ENCODE measurements at regions of chr1 and their contacts with region 1.

Region 1: DNA sequence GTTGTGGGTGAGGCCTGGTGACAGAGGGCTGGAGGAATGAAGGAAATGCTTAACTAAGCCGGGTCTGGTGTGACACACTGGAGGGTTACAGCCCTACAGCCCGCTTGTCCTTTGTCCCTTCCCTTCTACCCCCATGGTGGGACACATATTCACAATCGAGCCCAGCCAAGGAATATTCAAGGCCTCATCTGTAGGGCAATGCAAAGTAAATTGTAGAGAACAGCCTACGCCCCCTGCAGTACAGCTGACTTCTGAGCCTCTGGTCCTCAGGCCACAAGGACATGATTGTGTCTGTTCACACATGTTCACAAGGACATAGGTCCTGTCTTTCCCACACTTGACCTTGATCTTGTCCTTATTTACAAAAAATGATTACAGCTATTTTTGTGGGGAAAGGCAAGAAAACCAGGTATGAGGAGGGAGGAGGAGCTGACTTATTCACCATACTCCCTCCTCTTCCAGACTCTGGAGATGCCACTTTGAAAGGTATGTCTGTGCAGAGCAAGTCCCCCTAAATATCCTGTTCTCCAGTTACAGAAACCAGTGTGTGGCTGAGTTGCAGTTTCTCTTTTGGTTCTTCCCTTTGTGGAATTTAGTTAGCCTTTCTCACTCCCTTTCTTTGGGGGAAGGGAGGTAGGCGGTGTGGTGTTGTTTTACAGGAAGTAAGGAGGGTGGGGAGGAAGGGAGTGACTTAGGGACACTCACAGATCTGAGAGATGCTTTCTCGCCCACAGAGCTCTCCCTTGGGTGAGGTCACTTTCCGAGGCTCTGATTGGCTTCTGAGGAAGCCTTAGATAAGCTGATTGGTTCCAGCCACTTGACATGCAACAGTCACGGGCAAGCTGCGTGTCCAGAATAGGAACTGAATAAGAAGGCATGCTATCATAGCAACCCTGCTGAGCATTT is 14.6 kb downstream of the POLR3GL start:
- DNase-seq: peak; percentile 99
- H3K4me3 ChIP-seq: peak overlapping the region; percentile 44
- H3K27ac ChIP-seq: peak overlapping the region; percentile 97
- H3K27me3 ChIP-seq: no peaks in the 10 kb centered on the region
- CTCF ChIP-seq: peak; percentile 48; the same call in 1 of the 2 replicates

Region 2: DNA sequence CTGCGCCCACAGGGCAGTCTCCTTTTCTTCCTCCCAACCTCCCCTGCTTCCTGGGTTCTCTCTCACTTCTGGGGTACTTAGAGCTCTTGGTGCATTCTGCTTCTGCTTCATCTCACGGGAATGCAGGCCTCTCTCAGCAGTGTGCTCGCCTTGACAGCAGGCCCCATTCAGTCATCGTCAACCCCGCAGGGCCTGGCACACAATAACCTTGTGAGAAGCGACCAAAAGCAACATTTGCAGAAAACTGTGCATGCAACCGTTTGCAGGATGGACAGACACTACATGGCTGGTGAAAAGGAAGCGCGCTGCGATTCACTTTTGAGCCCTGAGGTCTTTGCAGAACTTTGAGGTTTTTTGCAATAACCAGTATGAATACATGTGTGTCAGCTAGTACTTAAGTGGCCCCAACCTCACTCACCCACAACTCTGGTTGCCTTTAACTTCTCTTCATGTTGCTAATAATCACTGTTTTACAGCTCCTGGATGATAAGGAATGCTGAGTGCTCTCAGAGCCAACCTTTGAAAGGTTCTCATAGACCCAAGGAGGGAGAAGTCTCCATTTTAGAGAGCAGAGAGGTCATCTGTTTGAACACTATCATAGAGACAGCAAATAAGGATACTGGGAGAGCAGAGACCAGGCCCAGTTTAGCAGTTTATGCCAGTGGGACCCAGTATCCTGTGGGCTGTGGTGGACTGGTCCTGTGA is 262.3 kb before region 1 on chr1:
- CTCF ChIA-PET with region 1: no interaction called
- POLR2A ChIA-PET with region 1: no interaction called
- DNase-seq: no peak
- H3K4me3 ChIP-seq: no peak overlapping the region
- H3K27ac ChIP-seq: peak overlapping the region; percentile 39
- H3K27me3 ChIP-seq: no peaks in the 10 kb centered on the region
- CTCF ChIP-seq: no peak

Region 3: GRCh38 chr1:145963995-145964901 is 14.9 kb before region 1 on chr1 and contains the starts of genes ANKRD34A and POLR3GL:
- CTCF ChIA-PET with region 1: interaction called, 37 read pairs
- POLR2A ChIA-PET with region 1: interaction called, 12 read pairs
- DNase-seq: peak; percentile 72
- H3K4me3 ChIP-seq: peak within 1 kb of the TSS; percentile 79
- H3K27ac ChIP-seq: peak within 1 kb of the TSS; percentile 89
- H3K27me3 ChIP-seq: no peaks in the 10 kb centered on the region
- CTCF ChIP-seq: peak; percentile 15; the same call in 1 of the 2 replicates
- polyA plus RNA-seq, gene ANKRD34A: 0.83 and 1.2 TPM in 2 replicates
- polyA plus RNA-seq, gene POLR3GL: 23.1 and 25.0 TPM in 2 replicates

Region 4: GRCh38 chr1:145990249-145991097 is 11.4 kb after region 1 on chr1:
- CTCF ChIA-PET with region 1: interaction called, 23 read pairs
- POLR2A ChIA-PET with region 1: no interaction called
- DNase-seq: no peak
- H3K4me3 ChIP-seq: no peak overlapping the region
- H3K27ac ChIP-seq: no peak overlapping the region
- H3K27me3 ChIP-seq: no peaks in the 10 kb centered on the region
- CTCF ChIP-seq: no peak

Region 5: GRCh38 chr1:145997016-145997717 is 18.1 kb after region 1 on chr1:
- CTCF ChIA-PET with region 1: interaction called, 44 read pairs
- POLR2A ChIA-PET with region 1: interaction called, 8 read pairs
- DNase-seq: no peak
- H3K4me3 ChIP-seq: peak overlapping the region; percentile 67
- H3K27ac ChIP-seq: peak overlapping the region; percentile 54
- H3K27me3 ChIP-seq: no peaks in the 10 kb centered on the region
- CTCF ChIP-seq: no peak

Region 6: DNA sequence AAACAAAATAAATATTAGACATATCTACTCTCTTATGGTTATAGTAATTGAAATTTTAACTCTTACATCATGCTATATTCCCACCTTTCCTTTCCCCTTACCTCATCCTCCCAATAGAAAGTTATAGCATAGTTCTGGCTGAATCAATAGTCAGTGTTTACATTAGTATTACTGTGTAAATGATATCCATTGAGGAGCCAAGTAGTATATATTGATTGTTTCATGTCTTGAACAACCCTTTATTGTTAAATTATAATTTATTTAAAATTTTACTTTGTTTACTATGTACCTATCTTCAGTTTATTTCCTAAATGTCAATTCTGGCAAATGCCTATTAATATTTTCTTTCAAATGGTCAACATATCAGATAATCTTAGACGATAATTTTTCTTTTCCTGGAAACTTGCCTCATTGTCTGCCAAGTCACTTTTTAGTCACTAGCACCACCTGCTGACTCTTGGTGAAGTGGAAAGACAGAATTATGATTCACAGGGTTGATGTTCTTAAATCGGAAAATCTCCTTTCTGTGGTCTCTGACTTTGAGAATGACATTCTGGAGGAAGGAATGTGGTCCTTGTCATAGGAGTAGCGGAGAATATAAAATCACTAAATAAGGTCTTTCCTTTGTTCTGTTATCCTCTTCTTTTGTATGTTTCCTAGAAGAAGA is 33.8 kb after region 1 on chr1:
- CTCF ChIA-PET with region 1: interaction called, 218 read pairs
- POLR2A ChIA-PET with region 1: no interaction called
- DNase-seq: peak; percentile 57
- H3K4me3 ChIP-seq: no peak overlapping the region
- H3K27ac ChIP-seq: no peak overlapping the region
- H3K27me3 ChIP-seq: no peaks in the 10 kb centered on the region
- CTCF ChIP-seq: peak; percentile 75

Region 7: GRCh38 chr1:146019231-146020057 is 40.3 kb after region 1 on chr1:
- CTCF ChIA-PET with region 1: interaction called, 24 read pairs
- POLR2A ChIA-PET with region 1: no interaction called
- DNase-seq: no peak
- H3K4me3 ChIP-seq: no peak overlapping the region
- H3K27ac ChIP-seq: no peak overlapping the region
- H3K27me3 ChIP-seq: peaks cover 36% of the 10 kb centered on the region
- CTCF ChIP-seq: no peak

Region 8: GRCh38 chr1:146036965-146037646 is 58.0 kb after region 1 on chr1:
- CTCF ChIA-PET with region 1: interaction called, 26 read pairs
- POLR2A ChIA-PET with region 1: no interaction called
- DNase-seq: peak; percentile 78
- H3K4me3 ChIP-seq: peak overlapping the region; percentile 85
- H3K27ac ChIP-seq: peak overlapping the region; percentile 83
- H3K27me3 ChIP-seq: no peaks in the 10 kb centered on the region
- CTCF ChIP-seq: no peak